Activated naive CD4-positive, alpha-beta T cell treated with anti-CD3 and anti-CD28 coated beads for 36 hours (primary cell): ENCODE measurements at regions of chr3 and their contacts with region 1.

Region 1: GRCh38 chr3:107660306-107660976 is 137.7 kb downstream of the BBX start:
- DNase-seq: no peak
- H3K4me3 Mint-ChIP-seq: no peak overlapping the region
- H3K27ac Mint-ChIP-seq: no peak overlapping the region
- H3K4me1 Mint-ChIP-seq: peaks cover 21% of the 10 kb centered on the region
- H3K27me3 Mint-ChIP-seq: no peaks in the 10 kb centered on the region

Region 2: DNA sequence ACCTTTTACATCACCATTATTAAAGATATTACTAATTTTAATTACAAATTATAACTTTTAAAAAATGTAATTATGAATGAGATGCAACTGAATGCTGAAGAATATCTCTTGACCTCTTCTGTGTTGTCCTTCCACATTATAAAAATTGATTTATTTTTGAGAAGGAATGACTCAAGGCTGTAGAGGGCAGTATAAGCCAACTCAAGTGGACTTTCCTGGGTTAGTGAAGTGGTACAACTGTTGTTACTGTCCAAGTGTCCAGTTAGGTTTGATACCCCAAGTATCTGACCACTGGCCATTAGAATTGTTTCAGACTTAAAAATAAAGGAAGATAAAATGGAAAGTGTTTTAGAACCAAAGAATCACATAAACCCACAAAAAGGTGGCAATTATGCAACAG is 85.8 kb before region 1 on chr3:
- CTCF ChIA-PET with region 1: interaction called, 9 read pairs
- intact Hi-C with region 1: loop called (anchors 2 kb)
- DNase-seq: peak; percentile 22
- H3K4me3 Mint-ChIP-seq: no peak overlapping the region
- H3K27ac Mint-ChIP-seq: no peak overlapping the region
- H3K4me1 Mint-ChIP-seq: peaks cover 27% of the 10 kb centered on the region
- H3K27me3 Mint-ChIP-seq: no peaks in the 10 kb centered on the region

Region 3: DNA sequence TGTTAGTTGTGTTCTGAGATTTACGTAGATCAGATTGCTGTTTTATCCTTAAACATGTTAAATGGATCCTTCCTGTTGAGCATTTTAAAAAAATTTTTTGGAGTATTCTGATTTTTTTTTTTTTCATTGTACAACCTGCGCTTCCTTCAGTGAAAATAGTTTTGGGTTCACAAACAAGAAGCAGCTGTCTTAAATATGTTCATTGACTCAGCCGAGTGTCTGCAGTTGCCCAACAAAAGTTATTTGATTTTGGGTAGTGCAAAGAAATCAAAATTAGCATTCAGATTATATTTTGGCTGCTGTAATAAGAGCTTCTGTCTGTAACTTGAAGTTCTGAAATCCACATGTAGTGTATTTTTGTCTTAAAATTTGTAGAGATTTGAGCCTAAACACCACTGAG is 10.5 kb after region 1 on chr3:
- CTCF ChIA-PET with region 1: interaction called, 74 read pairs
- intact Hi-C with region 1: no loop called
- DNase-seq: no peak
- H3K4me3 Mint-ChIP-seq: no peak overlapping the region
- H3K27ac Mint-ChIP-seq: no peak overlapping the region
- H3K4me1 Mint-ChIP-seq: peaks cover 21% of the 10 kb centered on the region
- H3K27me3 Mint-ChIP-seq: no peaks in the 10 kb centered on the region

Region 4: GRCh38 chr3:107767897-107768605 is 107.6 kb after region 1 on chr3:
- CTCF ChIA-PET with region 1: no interaction called
- intact Hi-C with region 1: no loop called
- DNase-seq: no peak
- H3K4me3 Mint-ChIP-seq: no peak overlapping the region
- H3K27ac Mint-ChIP-seq: no peak overlapping the region
- H3K4me1 Mint-ChIP-seq: no peaks in the 10 kb centered on the region
- H3K27me3 Mint-ChIP-seq: no peaks in the 10 kb centered on the region

Region 5: DNA sequence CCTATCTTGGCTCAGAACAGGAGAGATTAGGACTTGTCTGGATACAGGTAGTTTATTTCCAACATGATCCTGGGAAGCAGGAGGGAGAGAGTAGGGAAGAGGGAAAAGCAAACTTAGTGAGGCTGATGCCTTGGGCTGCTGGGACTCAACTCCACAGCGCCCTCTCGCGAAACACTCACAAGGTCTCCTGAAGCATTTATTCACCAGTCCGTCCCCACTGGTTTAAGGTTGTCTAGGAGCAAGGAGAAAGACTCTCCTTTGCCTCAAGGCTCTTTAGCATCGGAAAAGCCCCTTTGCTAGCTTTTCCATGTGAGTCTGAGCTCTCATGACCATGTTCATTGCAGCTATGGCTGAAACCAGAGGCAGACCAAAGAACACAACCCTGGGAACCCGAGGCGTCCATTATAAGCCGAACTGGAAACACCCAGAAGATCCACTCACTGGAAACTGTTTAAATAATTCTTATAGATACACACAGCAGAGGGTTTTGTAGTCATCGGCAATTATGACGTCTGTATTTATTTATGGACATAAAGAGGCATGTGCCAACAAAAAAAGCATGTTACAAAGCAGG is 185.9 kb after region 1 on chr3:
- CTCF ChIA-PET with region 1: no interaction called
- intact Hi-C with region 1: loop called (anchors 5 kb)
- DNase-seq: peak; percentile 65
- H3K4me3 Mint-ChIP-seq: no peak overlapping the region
- H3K27ac Mint-ChIP-seq: no peak overlapping the region
- H3K4me1 Mint-ChIP-seq: no peaks in the 10 kb centered on the region
- H3K27me3 Mint-ChIP-seq: no peaks in the 10 kb centered on the region

Region 6: DNA sequence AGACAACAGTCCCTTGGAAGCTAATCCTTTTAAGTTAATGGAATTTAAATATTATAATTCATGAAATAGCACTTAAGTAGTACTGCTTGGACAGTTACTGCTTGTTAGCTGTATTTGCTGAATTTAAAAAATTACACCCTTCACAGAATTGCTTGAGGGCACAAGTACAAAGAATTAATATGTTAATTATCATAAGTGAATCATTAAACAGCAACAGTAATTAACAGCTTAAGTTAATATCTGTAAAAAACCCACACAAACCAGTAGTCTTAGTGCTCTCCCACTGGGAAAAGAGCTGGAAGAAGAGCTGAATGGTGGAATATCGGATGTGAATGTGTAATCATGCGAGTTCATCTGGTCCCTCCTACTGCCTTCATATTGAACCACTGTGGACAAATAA is 198.4 kb after region 1 on chr3:
- CTCF ChIA-PET with region 1: no interaction called
- intact Hi-C with region 1: no loop called
- DNase-seq: no peak
- H3K4me3 Mint-ChIP-seq: no peak overlapping the region
- H3K27ac Mint-ChIP-seq: no peak overlapping the region
- H3K4me1 Mint-ChIP-seq: no peaks in the 10 kb centered on the region
- H3K27me3 Mint-ChIP-seq: peaks cover 3% of the 10 kb centered on the region

Region 7: DNA sequence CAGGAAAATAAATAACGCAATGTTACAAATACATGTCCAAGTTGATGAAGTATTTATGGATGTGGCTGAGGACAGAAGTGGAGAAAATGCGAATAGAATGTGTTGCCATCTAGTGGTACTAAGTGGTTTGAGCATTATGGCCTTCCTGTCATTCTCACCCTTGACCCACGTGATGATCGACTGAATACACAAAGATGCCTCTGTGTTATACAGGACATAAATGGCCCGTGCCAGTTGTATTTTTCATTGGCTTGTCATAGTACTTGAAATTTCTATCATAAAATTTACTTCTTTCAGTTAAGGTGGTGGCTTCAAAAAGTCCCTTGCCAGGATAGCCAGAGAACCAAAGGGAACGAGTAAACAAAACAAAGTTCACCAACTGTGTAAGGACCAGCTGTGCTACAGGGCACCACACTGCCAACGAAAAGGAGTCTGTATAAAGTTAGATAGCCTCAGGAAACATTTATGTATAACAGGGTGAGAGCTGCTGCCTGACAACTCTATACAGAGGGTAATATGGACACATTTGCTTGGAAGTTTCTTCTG is 746.3 kb after region 1 on chr3:
- CTCF ChIA-PET with region 1: no interaction called
- intact Hi-C with region 1: loop called (anchors 10 kb)
- DNase-seq: peak; percentile 25
- H3K4me3 Mint-ChIP-seq: no peak overlapping the region
- H3K27ac Mint-ChIP-seq: no peak overlapping the region
- H3K4me1 Mint-ChIP-seq: peaks cover 2% of the 10 kb centered on the region
- H3K27me3 Mint-ChIP-seq: peaks cover 3% of the 10 kb centered on the region